Activated naive CD4-positive, alpha-beta T cell treated with anti-CD3 and anti-CD28 coated beads for 36 hours (primary cell): ENCODE measurements at regions of chrX and their contacts with region 1.

Region 1: GRCh38 chrX:78708262-78708661 is 39.3 kb upstream of the LPAR4 start:
- DNase-seq: peak; percentile 10
- H3K4me3 Mint-ChIP-seq: no peak overlapping the region
- H3K27ac Mint-ChIP-seq: no peak overlapping the region
- H3K4me1 Mint-ChIP-seq: no peaks in the 10 kb centered on the region
- H3K27me3 Mint-ChIP-seq: no peaks in the 10 kb centered on the region

Region 2: GRCh38 chrX:78321809-78322208 is 386.5 kb before region 1 on chrX:
- CTCF ChIA-PET with region 1: no interaction called
- intact Hi-C with region 1: no loop called
- DNase-seq: peak; percentile 63
- H3K4me3 Mint-ChIP-seq: peak overlapping the region; percentile 32
- H3K27ac Mint-ChIP-seq: peak overlapping the region; percentile 85
- H3K4me1 Mint-ChIP-seq: peaks cover 36% of the 10 kb centered on the region
- H3K27me3 Mint-ChIP-seq: no peaks in the 10 kb centered on the region

Region 3: GRCh38 chrX:78595901-78596502 is 112.3 kb before region 1 on chrX:
- CTCF ChIA-PET with region 1: no interaction called
- intact Hi-C with region 1: loop called (anchors 10 kb)
- DNase-seq: peak; percentile 20
- H3K4me3 Mint-ChIP-seq: no peak overlapping the region
- H3K27ac Mint-ChIP-seq: no peak overlapping the region
- H3K4me1 Mint-ChIP-seq: no peaks in the 10 kb centered on the region
- H3K27me3 Mint-ChIP-seq: no peaks in the 10 kb centered on the region